ENCODE measurements at regions of chr2 and their contacts with region 1.

Region 1: GRCh38 chr2:47520825-47521665 is 118.1 kb downstream of the MSH2 start:
- DNase-seq: peak; percentile 97
- H3K4me3 ChIP-seq: peak overlapping the region; percentile 77
- H3K27ac ChIP-seq: peak overlapping the region; percentile 96
- H3K4me1 ChIP-seq: peaks cover 60% of the 10 kb centered on the region
- CTCF ChIP-seq: peak; percentile 66

Region 2: DNA sequence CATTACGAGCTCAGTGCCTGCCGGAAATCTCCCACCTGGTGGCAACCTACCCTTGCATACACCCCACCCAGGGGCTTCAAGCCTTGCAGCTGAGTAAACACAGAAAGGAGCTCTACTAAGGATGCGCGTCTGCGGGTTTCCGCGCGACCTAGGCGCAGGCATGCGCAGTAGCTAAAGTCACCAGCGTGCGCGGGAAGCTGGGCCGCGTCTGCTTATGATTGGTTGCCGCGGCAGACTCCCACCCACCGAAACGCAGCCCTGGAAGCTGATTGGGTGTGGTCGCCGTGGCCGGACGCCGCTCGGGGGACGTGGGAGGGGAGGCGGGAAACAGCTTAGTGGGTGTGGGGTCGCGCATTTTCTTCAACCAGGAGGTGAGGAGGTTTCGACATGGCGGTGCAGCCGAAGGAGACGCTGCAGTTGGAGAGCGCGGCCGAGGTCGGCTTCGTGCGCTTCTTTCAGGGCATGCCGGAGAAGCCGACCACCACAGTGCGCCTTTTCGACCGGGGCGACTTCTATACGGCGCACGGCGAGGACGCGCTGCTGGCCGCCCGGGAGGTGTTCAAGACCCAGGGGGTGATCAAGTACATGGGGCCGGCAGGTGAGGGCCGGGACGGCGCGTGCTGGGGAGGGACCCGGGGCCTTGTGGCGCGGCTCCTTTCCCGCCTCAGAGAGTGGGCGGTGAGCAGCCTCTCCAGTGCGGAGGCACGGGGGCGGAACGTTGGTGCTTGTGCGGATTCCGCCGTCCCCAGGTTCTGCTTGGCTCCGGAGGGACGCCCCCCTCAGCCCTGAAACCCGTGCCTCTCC is 118.0 kb before region 1 on chr2 and contains the start of gene MSH2:
- CTCF ChIA-PET with region 1: no interaction called
- POLR2A ChIA-PET with region 1: interaction called, 11 read pairs
- intact Hi-C with region 1: loop called (anchors 2 kb)
- DNase-seq: peak; percentile 98
- H3K4me3 ChIP-seq: peak within 1 kb of the TSS; percentile 86
- H3K27ac ChIP-seq: peak within 1 kb of the TSS; percentile 68
- H3K4me1 ChIP-seq: peaks cover 20% of the 10 kb centered on the region
- CTCF ChIP-seq: no peak; the same call in 1 of the 2 replicates
- total RNA-seq, gene MSH2: 96.8 and 107 TPM in 2 replicates

Region 3: GRCh38 chr2:47486841-47487497 is 34.1 kb before region 1 on chr2:
- CTCF ChIA-PET with region 1: interaction called, 5 read pairs
- POLR2A ChIA-PET with region 1: interaction called, 12 read pairs
- intact Hi-C with region 1: no loop called
- DNase-seq: peak; percentile 67
- H3K4me3 ChIP-seq: no peak overlapping the region
- H3K27ac ChIP-seq: peak overlapping the region; percentile 15
- H3K4me1 ChIP-seq: peaks cover 18% of the 10 kb centered on the region
- CTCF ChIP-seq: no peak

Region 4: DNA sequence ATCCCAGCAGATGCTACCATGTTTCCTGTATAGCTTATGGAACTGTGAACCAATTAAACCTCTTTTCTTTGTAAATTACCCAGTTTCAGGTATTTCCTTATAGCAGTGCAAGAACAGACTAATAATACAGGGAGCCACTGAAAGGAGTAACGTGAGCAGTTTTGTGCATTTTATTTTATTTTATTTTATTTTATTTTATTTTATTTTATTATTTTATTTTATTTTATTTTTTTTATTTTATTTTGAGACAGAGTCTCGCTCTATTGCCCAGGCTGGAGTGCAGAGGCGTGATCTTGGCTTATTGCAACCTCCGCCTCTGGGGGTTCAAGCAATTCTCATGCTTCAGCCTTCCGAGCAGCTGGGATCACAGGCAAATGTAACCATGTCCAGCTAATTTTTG is 105.6 kb after region 1 on chr2:
- CTCF ChIA-PET with region 1: no interaction called
- POLR2A ChIA-PET with region 1: no interaction called
- intact Hi-C with region 1: no loop called
- DNase-seq: no peak
- H3K4me3 ChIP-seq: no peak overlapping the region
- H3K27ac ChIP-seq: no peak overlapping the region
- H3K4me1 ChIP-seq: peaks cover 19% of the 10 kb centered on the region
- CTCF ChIP-seq: no peak

Region 5: GRCh38 chr2:47653902-47654789 is 133.1 kb after region 1 on chr2:
- CTCF ChIA-PET with region 1: interaction called, 12 read pairs
- POLR2A ChIA-PET with region 1: interaction called, 19 read pairs
- intact Hi-C with region 1: loop called (anchors 1 kb)
- DNase-seq: peak; percentile 70
- H3K4me3 ChIP-seq: peak overlapping the region; percentile 71
- H3K27ac ChIP-seq: peak overlapping the region; percentile 97
- H3K4me1 ChIP-seq: peaks cover 78% of the 10 kb centered on the region
- CTCF ChIP-seq: peak; percentile 73

Region 6: GRCh38 chr2:47724221-47724981 is 203.4 kb after region 1 on chr2:
- CTCF ChIA-PET with region 1: no interaction called
- POLR2A ChIA-PET with region 1: interaction called, 10 read pairs
- intact Hi-C with region 1: loop called (anchors 1 kb)
- DNase-seq: peak; percentile 99
- H3K4me3 ChIP-seq: peak overlapping the region; percentile 28
- H3K27ac ChIP-seq: peak overlapping the region; percentile 100
- H3K4me1 ChIP-seq: peaks cover 96% of the 10 kb centered on the region
- CTCF ChIP-seq: no peak

Region 7: GRCh38 chr2:47767880-47768609 is 247.0 kb after region 1 on chr2:
- CTCF ChIA-PET with region 1: no interaction called
- POLR2A ChIA-PET with region 1: interaction called, 4 read pairs
- intact Hi-C with region 1: loop called (anchors 1 kb)
- DNase-seq: peak; percentile 75
- H3K4me3 ChIP-seq: no peak overlapping the region
- H3K27ac ChIP-seq: peak overlapping the region; percentile 65
- H3K4me1 ChIP-seq: peaks cover 65% of the 10 kb centered on the region
- CTCF ChIP-seq: peak; percentile 99

Region 8: DNA sequence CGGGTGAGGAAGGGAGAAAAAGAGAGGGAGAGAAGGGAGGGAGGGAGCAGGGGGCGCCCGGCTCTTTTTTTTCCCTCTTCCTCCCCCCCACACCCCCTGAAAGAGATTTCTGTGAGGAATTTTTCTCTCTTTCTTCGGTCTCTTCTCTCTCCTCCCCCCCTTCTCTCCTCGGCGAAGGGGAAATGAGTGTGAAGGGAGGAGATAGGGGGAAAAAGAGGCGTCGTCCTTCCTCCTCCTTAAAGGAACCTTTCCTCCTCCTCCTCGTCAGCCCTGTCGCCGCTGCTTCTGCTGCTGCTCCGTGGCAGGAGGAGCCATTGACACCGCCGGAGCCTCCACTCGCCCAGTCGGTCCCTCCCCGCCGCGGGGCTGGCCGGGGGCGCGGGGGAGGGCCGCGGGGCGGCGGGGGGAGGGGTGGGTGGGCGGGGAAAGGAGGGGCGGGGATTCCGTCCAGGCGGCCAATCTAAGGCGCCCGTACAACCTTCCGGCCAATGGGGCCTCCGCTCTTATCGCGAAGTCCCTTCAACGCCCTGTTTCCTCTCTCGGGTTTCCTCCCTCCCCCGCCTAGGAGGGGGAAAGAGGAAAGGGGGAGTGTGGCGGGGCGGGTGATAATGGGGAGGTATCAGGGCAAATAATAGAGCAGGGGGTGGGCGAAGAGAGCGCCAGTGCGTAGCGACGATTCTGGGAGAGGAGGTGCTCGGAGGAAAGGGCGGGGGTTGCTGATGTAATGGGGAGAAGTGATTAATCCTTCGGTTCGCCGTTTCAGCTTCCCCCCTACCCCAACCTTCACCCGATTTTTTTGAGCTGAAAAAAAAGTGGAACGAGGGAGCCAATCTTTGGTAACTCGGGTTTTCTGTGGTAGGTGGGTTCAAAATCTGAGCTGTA is 385.4 kb after region 1 on chr2 and contains the start of gene FBXO11:
- CTCF ChIA-PET with region 1: no interaction called
- POLR2A ChIA-PET with region 1: no interaction called
- intact Hi-C with region 1: loop called (anchors 2 kb)
- DNase-seq: peak; percentile 99
- H3K4me3 ChIP-seq: peak within 1 kb of the TSS; percentile 93
- H3K27ac ChIP-seq: peak within 1 kb of the TSS; percentile 95
- H3K4me1 ChIP-seq: peaks cover 31% of the 10 kb centered on the region
- CTCF ChIP-seq: no peak; the same call in 1 of the 2 replicates
- total RNA-seq, gene FBXO11: 24.7 and 31.9 TPM in 2 replicates

Measured in OCI-LY7 (cell line).